Astrocyte of the cerebellum (primary cell): ENCODE measurements at regions of chr22 and their contacts with region 1.

Region 1: DNA sequence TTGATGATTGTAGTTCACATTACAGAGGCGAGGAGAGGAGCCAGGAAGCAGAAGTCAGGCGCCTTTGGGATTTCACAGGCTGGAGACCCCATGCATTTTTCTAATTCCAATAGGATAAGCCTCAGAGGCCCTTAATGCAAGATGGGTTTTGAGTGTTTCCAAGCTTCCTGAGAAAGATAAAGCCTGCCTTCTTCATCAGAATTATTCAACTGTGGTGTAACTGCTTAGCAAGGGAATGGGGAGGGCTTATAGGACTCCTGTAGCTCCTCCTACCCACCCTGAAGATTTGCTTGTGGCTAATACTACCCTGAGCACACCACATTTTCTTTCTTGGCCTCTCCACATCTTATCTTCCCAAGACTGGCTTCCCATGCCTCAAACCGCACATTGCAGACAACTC is 151.1 kb upstream of the ISX start:
- DNase-seq: no peak
- H3K4me3 ChIP-seq: no peak overlapping the region
- CTCF ChIP-seq: no peak

Region 2: GRCh38 chr22:34878996-34879395 is 35.9 kb before region 1 on chr22:
- in situ Hi-C with region 1: loop called (anchors 5 kb)
- DNase-seq: no peak
- H3K4me3 ChIP-seq: no peak overlapping the region
- CTCF ChIP-seq: no peak

Region 3: GRCh38 chr22:34960005-34960404 is 45.2 kb after region 1 on chr22:
- in situ Hi-C with region 1: no loop called
- DNase-seq: no peak
- H3K4me3 ChIP-seq: no peak overlapping the region
- CTCF ChIP-seq: no peak